Posterior cingulate gyrus (tissue), 11 donors: ENCODE measurements at regions of chr14 and their contacts with region 1.

Region 1: DNA sequence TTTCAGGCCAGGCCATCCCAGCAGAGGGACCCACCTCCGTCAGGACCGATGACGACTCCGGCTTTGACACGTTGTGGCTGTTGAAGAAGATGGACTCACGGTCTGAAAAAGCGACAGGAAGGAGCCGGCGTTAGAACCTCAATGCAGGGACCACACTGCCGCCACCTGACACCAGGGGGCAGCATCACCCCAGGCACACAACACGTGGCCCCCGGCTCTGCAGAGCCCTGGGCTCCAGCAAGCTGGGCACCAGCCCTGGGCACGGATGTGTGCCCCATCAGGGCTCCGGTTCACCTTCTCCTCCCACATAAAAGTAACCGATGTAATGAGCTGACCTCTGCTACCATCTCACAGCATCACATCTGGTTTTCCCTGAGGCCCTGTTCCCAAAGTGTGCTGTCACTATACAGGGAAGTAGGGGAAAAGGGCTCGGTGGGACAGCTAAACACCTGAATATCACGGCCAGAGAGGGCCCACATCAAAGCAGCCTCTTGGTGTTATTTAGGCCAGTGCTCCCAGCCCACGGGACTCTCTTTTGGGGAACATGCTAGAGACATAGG is 29.0 kb downstream of the CHGA start:
- DNase-seq: peak; percentile 72 to 98 (median 90)

Region 2: GRCh38 chr14:92719890-92720323 is 232.1 kb before region 1 on chr14:
- intact Hi-C with region 1: no loop called
- DNase-seq: peak in 1 of 10 donors; percentile 15

Region 3: GRCh38 chr14:92914087-92914656 is 37.8 kb before region 1 on chr14:
- intact Hi-C with region 1: no loop called
- DNase-seq: no peak

Region 4: DNA sequence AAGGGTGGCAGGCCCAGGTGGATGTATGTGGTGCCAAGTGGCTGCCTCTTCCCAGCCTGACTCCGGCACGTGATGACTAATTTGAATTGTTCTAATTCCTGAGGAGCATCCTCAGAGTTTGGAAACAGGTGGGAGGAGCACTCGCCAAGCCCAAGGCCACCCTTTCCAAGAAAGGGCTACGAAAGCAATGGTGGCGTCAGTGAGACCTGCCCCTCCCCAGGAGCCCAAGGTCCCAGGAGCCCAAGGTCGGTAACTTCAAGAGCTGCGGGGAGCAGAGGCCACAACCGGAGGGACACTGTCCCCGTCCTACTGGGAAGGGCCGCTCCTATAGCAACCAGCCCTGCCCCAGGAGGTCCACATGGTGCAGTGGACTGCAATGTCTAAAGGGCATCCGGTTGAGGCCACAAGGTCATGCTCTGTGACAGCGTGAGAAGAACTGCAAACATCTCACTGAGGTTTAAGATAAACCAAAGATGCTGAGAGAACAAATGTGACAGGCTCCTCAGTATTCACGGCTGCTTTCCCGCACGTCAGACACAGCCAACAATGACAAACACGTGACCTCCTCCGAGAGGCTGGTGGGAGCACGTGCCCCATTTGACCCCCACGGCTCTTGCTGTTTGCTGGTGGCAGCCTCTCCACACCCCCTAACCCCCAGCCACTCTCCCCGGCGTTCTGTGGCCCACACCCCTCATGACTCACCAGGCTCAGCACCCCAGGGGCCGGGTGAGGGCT is 84.1 kb after region 1 on chr14:
- intact Hi-C with region 1: loop called (anchors 5 kb)
- DNase-seq: peak; percentile 79 to 98 (median 90)

Region 5: DNA sequence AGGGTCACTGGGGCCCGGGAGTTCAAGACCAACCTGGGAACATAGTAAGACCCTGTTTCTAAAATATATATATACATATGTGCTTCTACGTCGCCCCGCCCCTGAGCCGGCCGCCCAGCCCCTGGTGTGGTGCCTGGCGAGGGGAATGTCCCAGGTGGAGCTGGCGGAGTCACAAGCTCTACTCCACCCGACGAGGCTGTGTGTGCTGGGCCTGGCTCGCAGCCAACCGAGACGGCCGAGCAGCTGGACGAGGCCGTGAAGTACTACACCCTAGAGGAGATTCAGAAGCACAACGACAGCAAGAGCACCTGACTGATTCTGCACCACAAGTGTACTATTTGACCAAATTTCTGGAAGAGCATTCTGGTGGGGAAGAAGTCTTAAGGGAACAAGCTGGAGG is 185.9 kb after region 1 on chr14:
- intact Hi-C with region 1: loop called (anchors 1 kb)
- DNase-seq: peak in 1 of 10 donors; percentile 72

Region 6: GRCh38 chr14:93175492-93175891 is 223.5 kb after region 1 on chr14:
- intact Hi-C with region 1: loop called (anchors 5 kb)
- DNase-seq: no peak